SK-N-SH (cell line): ENCODE measurements at regions of chr4 and their contacts with region 1.

Region 1: GRCh38 chr4:73127839-73128453 is 58.4 kb upstream of the COX18 start:
- DNase-seq: peak; percentile 45
- H3K4me3 ChIP-seq: no peak overlapping the region; a peak in 1 of 4 replicates
- H3K27ac ChIP-seq: peak overlapping the region in 1 of 2 experiments; percentile 43; a peak in 1 of 4 replicates
- H3K4me1 ChIP-seq: peaks cover 0 to 7% of the 10 kb centered on the region in 2 experiments; a peak in 2 of 4 replicates
- H3K27me3 ChIP-seq: no peaks in the 10 kb centered on the region
- CTCF ChIP-seq: peak; percentile 50
- EP300 ChIP-seq: no peak
- RAD21 ChIP-seq: peak; percentile 42

Region 2: GRCh38 chr4:73109493-73109892 is 18.5 kb before region 1 on chr4:
- CTCF ChIA-PET with region 1: interaction called, 12 read pairs
- POLR2A ChIA-PET with region 1: no interaction called
- DNase-seq: no peak
- H3K4me3 ChIP-seq: no peak overlapping the region
- H3K27ac ChIP-seq: no peak overlapping the region
- H3K4me1 ChIP-seq: no peaks in the 10 kb centered on the region
- H3K27me3 ChIP-seq: no peaks in the 10 kb centered on the region
- CTCF ChIP-seq: no peak
- EP300 ChIP-seq: no peak
- RAD21 ChIP-seq: no peak

Region 3: DNA sequence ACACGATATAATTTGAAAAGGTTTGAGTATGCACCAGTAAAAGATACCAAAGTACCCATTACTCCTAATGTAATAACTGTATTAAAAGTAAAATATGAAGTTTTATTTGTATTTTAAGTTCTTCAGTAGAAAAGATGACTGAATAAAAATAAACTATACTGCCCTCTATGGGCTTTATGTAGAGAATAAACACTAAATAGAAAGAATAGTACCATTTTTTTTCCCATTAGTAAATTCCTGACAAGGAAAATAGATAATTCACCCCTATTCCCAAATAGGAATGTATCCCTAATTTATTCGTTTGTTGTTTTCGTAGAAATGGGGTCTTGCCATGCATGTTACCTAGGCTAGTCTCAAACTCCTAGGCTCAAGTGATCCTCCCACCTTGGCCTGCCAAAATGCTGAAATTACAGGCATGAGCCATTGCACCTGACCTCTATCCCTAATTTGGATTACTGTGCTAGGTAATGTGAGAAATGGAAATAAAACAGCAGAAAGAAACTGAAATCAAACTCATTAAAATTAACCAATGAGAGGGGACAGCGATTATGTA is 15.1 kb after region 1 on chr4:
- CTCF ChIA-PET with region 1: interaction called, 18 read pairs
- POLR2A ChIA-PET with region 1: no interaction called
- DNase-seq: no peak
- H3K4me3 ChIP-seq: no peak overlapping the region
- H3K27ac ChIP-seq: no peak overlapping the region
- H3K4me1 ChIP-seq: no peaks in the 10 kb centered on the region
- H3K27me3 ChIP-seq: no peaks in the 10 kb centered on the region
- CTCF ChIP-seq: peak; percentile 59
- EP300 ChIP-seq: no peak
- RAD21 ChIP-seq: no peak

Region 4: DNA sequence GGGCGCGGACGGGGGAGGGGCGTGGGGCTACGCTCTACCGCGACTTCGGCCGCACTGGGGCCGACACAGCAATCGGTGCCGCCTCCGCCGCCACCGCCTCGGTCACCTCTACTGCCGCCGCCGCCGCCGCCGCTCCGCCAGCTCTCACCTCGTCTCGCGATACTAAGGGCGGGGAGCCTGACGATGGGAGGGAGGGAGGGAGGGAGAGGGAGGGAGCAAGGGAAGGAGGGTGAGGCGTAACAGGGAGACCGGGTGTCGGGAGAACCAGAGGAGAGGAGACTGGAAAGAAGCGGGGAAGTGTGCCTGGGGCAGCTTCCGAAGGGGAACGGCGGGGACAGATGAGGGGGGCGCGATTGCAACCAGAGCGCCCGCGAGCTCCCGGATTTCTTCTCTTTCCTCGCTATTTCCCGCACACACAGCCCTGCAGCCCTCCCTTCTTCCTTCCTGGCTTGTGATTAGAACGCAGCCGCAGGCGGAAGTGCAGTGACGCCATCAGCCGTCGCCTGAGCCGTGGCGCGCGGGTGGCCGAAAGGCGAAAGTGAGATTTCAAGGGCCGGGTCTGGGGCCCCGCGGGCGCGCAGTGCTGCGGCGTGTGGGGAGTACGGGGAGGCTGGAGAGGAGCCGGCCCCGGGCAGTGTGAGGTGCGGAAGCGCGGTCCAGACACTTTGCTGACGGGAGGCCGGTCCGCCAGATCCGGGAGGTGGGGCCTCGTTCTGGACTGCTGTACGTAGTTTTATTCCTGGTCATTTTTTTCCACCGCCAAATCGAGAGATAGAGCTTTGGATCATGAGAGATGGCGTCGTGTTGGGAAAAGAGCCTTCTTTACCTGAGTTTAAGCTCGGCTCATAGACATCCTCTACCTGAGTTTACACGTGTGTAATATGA is 131.0 kb after region 1 on chr4 and contains the start of gene ANKRD17:
- CTCF ChIA-PET with region 1: interaction called, 48 read pairs
- POLR2A ChIA-PET with region 1: no interaction called
- DNase-seq: peak; percentile 91
- H3K4me3 ChIP-seq: peak within 1 kb of the TSS; percentile 75 to 94
- H3K27ac ChIP-seq: peak within 1 kb of the TSS; percentile 94 to 99
- H3K4me1 ChIP-seq: peaks cover 7 to 9% of the 10 kb centered on the region in 2 experiments; a peak in 2 of 4 replicates
- H3K27me3 ChIP-seq: no peaks in the 10 kb centered on the region
- CTCF ChIP-seq: no peak
- EP300 ChIP-seq: peak in 1 of 2 experiments; percentile 1; a peak in 1 of 4 replicates
- RAD21 ChIP-seq: no peak
- polyA plus RNA-seq, gene ANKRD17: 25.6 and 33.1 TPM in 2 replicates

Region 5: GRCh38 chr4:73520821-73521220 is 392.9 kb after region 1 on chr4:
- CTCF ChIA-PET with region 1: no interaction called
- POLR2A ChIA-PET with region 1: no interaction called
- DNase-seq: no peak
- H3K4me3 ChIP-seq: no peak overlapping the region
- H3K27ac ChIP-seq: no peak overlapping the region
- H3K4me1 ChIP-seq: no peaks in the 10 kb centered on the region
- H3K27me3 ChIP-seq: peaks cover 15% of the 10 kb centered on the region; the same call in 1 of the 2 replicates
- CTCF ChIP-seq: no peak
- EP300 ChIP-seq: no peak
- RAD21 ChIP-seq: no peak